Astrocyte of the cerebellum (primary cell): ENCODE measurements at regions of chr9 and their contacts with region 1.

Region 1: DNA sequence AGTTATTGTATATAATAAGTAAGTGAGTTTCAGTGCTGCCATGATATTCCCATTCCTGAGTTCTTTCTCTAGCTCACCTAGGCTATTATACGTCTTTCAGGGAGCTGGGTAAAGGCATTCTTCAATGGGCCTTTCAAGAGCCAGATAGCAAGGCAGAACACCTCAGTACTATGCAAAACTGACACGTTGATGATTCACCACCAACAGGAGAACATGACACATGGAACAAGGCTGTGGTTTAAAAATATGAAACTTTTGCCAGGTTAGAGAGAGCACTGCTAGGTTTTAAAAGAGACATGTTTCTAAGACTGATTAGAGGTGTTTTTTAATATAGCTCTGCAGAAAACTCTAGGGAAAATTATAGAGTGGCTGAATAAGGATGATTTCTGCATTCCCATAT is 95.9 kb downstream of the UGCG start:
- DNase-seq: peak; percentile 57
- H3K4me3 ChIP-seq: no peak overlapping the region
- CTCF ChIP-seq: no peak

Region 2: GRCh38 chr9:111937781-111938426 is 54.6 kb before region 1 on chr9:
- in situ Hi-C with region 1: loop called (anchors 5 kb)
- DNase-seq: no peak
- H3K4me3 ChIP-seq: no peak overlapping the region
- CTCF ChIP-seq: no peak

Region 3: GRCh38 chr9:112065806-112066606 is 73.5 kb after region 1 on chr9:
- in situ Hi-C with region 1: no loop called
- DNase-seq: peak; percentile 53
- H3K4me3 ChIP-seq: no peak overlapping the region
- CTCF ChIP-seq: no peak